ENCODE measurements at regions of chr9 and their contacts with region 1.

Region 1: GRCh38 chr9:21102305-21102704 is 24.6 kb upstream of the IFNB1 start:
- DNase-seq: no peak
- ATAC-seq: no peak
- H3K4me3 ChIP-seq: no peak overlapping the region
- H3K4me1 ChIP-seq: no peaks in the 10 kb centered on the region
- CTCF ChIP-seq: no peak

Region 2: DNA sequence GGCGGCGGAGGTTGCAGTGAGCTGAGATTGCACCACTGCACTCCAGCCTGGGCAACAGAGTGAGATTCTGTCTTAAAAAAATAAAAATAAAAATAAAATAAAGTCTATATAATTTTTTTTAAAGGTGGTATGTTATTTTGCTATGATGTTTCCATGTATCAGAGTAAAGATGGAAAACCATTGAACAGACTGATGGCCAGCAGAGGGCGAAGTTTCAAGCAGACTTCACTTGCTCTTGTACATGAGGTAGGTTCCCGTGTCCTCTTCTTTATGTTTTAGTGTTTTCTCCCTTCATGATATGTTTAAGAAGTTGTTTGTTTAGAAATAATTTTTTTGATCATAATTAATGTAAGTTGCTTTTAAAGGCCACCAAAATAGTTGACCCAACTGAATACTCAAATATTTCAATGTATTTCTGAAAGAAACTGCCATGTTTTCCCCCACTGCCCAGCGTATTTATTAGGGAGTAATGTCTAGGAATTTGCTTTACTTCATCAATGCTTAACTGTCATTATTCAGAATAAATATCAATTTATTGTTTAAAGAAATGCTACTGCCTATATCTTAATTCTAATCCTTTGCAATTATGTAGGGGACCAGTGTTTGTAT is 217.2 kb before region 1 on chr9:
- intact Hi-C with region 1: loop called in 1 of 2 experiments (anchors 10 kb)
- DNase-seq: peak in 2 of 3 donors; percentile 46 to 86
- ATAC-seq: peak; percentile 57
- H3K4me3 ChIP-seq: no peak overlapping the region
- H3K4me1 ChIP-seq: no peaks in the 10 kb centered on the region
- CTCF ChIP-seq: no peak

Region 3: GRCh38 chr9:21210311-21210710 is 108.0 kb after region 1 on chr9:
- intact Hi-C with region 1: no loop called
- DNase-seq: no peak
- ATAC-seq: no peak
- H3K4me3 ChIP-seq: no peak overlapping the region
- H3K4me1 ChIP-seq: no peaks in the 10 kb centered on the region
- CTCF ChIP-seq: no peak